ENCODE measurements at regions of chr18 and their contacts with region 1.

Region 1: GRCh38 chr18:3593904-3594661 is 144.1 kb downstream of the TGIF1 start:
- DNase-seq: peak in 3 of 4 donors; percentile 89 to 96 (median 95)
- ATAC-seq: peak; percentile 86
- H3K4me3 ChIP-seq: peak overlapping the region; percentile 32 to 52
- H3K27ac ChIP-seq: peak overlapping the region; percentile 97
- H3K4me1 ChIP-seq: peaks cover 36 to 59% of the 10 kb centered on the region in 2 donors
- H3K27me3 ChIP-seq: no peaks in the 10 kb centered on the region
- CTCF ChIP-seq: peak; percentile 76 to 82

Region 2: DNA sequence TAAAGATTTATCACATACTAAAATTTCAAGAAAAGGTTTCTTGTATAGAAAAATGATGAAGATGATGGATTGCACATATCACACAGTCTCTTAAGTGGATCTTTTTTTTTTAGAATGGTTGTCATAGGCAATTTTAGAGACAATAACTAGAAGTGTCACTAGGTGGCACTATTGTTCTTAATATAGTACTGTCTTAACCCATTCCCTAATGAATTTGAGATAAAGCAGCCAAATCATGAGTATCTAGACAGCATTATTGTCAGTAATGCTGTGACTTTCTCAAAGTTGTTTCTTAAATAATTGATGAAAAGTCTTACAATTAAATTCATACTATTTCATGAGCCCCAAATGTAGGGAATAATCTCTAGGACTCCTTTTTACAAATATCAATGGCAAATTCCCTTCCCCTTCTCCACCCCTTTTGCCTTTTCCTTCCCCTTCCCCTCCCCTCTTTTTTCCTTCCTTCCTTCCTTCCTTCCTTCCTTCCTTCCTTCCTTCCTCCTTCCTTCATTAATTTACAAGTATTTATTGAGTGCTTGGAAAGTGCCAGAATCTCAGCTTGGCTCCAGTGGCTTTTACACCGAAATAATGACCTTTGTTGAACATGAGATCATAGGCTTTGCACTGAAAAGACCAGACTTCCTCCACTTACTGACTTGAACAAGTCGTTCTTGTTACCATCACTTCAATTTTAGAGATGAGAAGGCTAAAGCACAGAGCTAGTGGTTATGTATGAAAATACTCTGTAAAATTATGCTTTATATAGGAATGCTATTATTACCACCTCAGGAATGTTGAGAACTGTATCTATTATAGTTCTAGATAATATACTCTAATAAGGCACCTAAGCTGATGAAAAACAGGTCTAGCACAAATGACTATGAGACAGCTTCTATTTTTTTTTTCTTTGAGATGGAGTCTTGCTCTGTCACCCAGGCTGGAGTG is 312.4 kb before region 1 on chr18:
- intact Hi-C with region 1: loop called in 1 of 2 experiments (anchors 10 kb)
- DNase-seq: peak in 2 of 4 donors; percentile 75 to 77
- ATAC-seq: peak; percentile 92
- H3K4me3 ChIP-seq: no peak overlapping the region
- H3K27ac ChIP-seq: peak overlapping the region in 1 of 2 donors; percentile 40
- H3K4me1 ChIP-seq: peaks cover 0 to 19% of the 10 kb centered on the region in 2 donors
- H3K27me3 ChIP-seq: no peaks in the 10 kb centered on the region
- CTCF ChIP-seq: peak; percentile 54 to 59